CD8-positive, alpha-beta memory T cell (primary cell): ENCODE measurements at regions of chr19 and their contacts with region 1.

Region 1: GRCh38 chr19:6862673-6863078 is 24.7 kb upstream of the ADGRE1 start:
- DNase-seq: peak; percentile 82 to 94 (median 88)
- H3K4me3 ChIP-seq: no peak overlapping the region
- H3K4me3 Mint-ChIP-seq: peak overlapping the region; percentile 64 to 89 (median 88)
- H3K27ac ChIP-seq: no peak overlapping the region
- H3K27ac Mint-ChIP-seq: peak overlapping the region; percentile 73 to 97 (median 84)
- H3K4me1 ChIP-seq: peaks cover 7% of the 10 kb centered on the region
- H3K4me1 Mint-ChIP-seq: peaks cover 15 to 20% (median 19%) of the 10 kb centered on the region in 3 donors
- H3K27me3 ChIP-seq: no peaks in the 10 kb centered on the region
- H3K27me3 Mint-ChIP-seq: peaks cover 2 to 7% of the 10 kb centered on the region in 2 donors

Region 2: GRCh38 chr19:6516659-6517291 is 345.9 kb before region 1 on chr19:
- CTCF ChIA-PET with region 1: interaction called, 40 read pairs
- POLR2A ChIA-PET with region 1: interaction called, 5 read pairs
- DNase-seq: peak; percentile 81 to 93 (median 88)
- H3K4me3 ChIP-seq: peak overlapping the region; percentile 84
- H3K4me3 Mint-ChIP-seq: peak overlapping the region; percentile 92 to 98 (median 94)
- H3K27ac ChIP-seq: peak overlapping the region; percentile 70
- H3K27ac Mint-ChIP-seq: peak overlapping the region; percentile 13 to 96 (median 92)
- H3K4me1 ChIP-seq: peaks cover 16% of the 10 kb centered on the region
- H3K4me1 Mint-ChIP-seq: peaks cover 32 to 38% (median 33%) of the 10 kb centered on the region in 3 donors
- H3K27me3 ChIP-seq: no peaks in the 10 kb centered on the region
- H3K27me3 Mint-ChIP-seq: no peaks in the 10 kb centered on the region

Region 3: DNA sequence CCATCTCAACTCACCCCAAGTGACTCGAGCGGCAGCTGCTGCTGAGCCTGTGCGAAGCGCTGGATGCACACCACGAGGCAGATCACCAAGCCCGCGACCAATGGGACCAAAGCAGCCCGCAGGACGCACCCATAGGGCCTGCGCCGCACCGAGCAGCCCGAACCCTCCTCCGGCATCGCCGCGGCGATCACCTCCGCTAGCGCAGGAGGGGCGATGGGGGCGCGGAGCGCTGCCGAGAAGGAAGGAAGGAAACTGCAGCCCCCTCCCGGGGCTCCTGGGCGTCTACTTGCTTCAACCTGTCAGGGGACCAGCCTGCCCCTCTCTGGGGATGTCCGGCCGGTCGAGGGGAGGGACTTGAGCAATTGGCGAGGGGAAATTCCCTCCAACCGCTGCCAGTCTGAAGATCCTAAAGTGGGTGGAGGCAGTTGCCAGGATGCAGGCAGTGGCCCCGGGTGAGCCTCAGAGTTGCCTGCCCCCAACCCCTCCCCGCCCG is 271.8 kb before region 1 on chr19 and contains the start of gene CD70:
- CTCF ChIA-PET with region 1: no interaction called
- POLR2A ChIA-PET with region 1: no interaction called
- DNase-seq: peak; percentile 28 to 65 (median 51)
- H3K4me3 ChIP-seq: peak within 1 kb of the TSS; percentile 62
- H3K4me3 Mint-ChIP-seq: peak within 1 kb of the TSS; percentile 79 to 90 (median 86)
- H3K27ac ChIP-seq: peak within 1 kb of the TSS; percentile 19
- H3K27ac Mint-ChIP-seq: peak within 1 kb of the TSS in 7 of 8 donors; percentile 30 to 97 (median 79)
- H3K4me1 ChIP-seq: peaks cover 48% of the 10 kb centered on the region
- H3K4me1 Mint-ChIP-seq: peaks cover 56 to 63% (median 59%) of the 10 kb centered on the region in 3 donors
- H3K27me3 ChIP-seq: peaks cover 14% of the 10 kb centered on the region
- H3K27me3 Mint-ChIP-seq: peaks cover 35 to 41% of the 10 kb centered on the region in 2 donors
- total RNA-seq, gene CD70: 63.1 to 70.0 TPM

Region 4: GRCh38 chr19:6632002-6632621 is 230.6 kb before region 1 on chr19:
- CTCF ChIA-PET with region 1: interaction called, 42 read pairs
- POLR2A ChIA-PET with region 1: interaction called, 6 read pairs
- DNase-seq: peak; percentile 71 to 85 (median 77)
- H3K4me3 ChIP-seq: no peak overlapping the region
- H3K4me3 Mint-ChIP-seq: peak overlapping the region in 1 of 7 donors; percentile 3
- H3K27ac ChIP-seq: no peak overlapping the region
- H3K27ac Mint-ChIP-seq: peak overlapping the region in 4 of 8 donors; percentile 47 to 76 (median 71)
- H3K4me1 ChIP-seq: no peaks in the 10 kb centered on the region
- H3K4me1 Mint-ChIP-seq: peaks cover 14 to 17% (median 15%) of the 10 kb centered on the region in 3 donors
- H3K27me3 ChIP-seq: no peaks in the 10 kb centered on the region
- H3K27me3 Mint-ChIP-seq: peaks cover 4 to 5% of the 10 kb centered on the region in 2 donors

Region 5: GRCh38 chr19:6772028-6772865 is 90.4 kb before region 1 on chr19 and contains the start of gene VAV1:
- CTCF ChIA-PET with region 1: interaction called, 22 read pairs
- POLR2A ChIA-PET with region 1: no interaction called
- DNase-seq: peak; percentile 74 to 88 (median 75)
- H3K4me3 ChIP-seq: peak within 1 kb of the TSS; percentile 98
- H3K4me3 Mint-ChIP-seq: peak within 1 kb of the TSS; percentile 85 to 97 (median 92)
- H3K27ac ChIP-seq: peak within 1 kb of the TSS; percentile 93
- H3K27ac Mint-ChIP-seq: peak within 1 kb of the TSS; percentile 89 to 99 (median 98)
- H3K4me1 ChIP-seq: peaks cover 38% of the 10 kb centered on the region
- H3K4me1 Mint-ChIP-seq: peaks cover 45 to 56% (median 55%) of the 10 kb centered on the region in 3 donors
- H3K27me3 ChIP-seq: no peaks in the 10 kb centered on the region
- H3K27me3 Mint-ChIP-seq: no peaks in the 10 kb centered on the region
- total RNA-seq, gene VAV1: 51.9 to 52.9 TPM

Region 6: GRCh38 chr19:6876748-6877147 is 14.1 kb after region 1 on chr19:
- CTCF ChIA-PET with region 1: interaction called, 14 read pairs
- POLR2A ChIA-PET with region 1: no interaction called
- DNase-seq: no peak
- H3K4me3 ChIP-seq: no peak overlapping the region
- H3K4me3 Mint-ChIP-seq: no peak overlapping the region
- H3K27ac ChIP-seq: no peak overlapping the region
- H3K27ac Mint-ChIP-seq: no peak overlapping the region
- H3K4me1 ChIP-seq: peaks cover 5% of the 10 kb centered on the region
- H3K4me1 Mint-ChIP-seq: peaks cover 0 to 5% (median 3%) of the 10 kb centered on the region in 3 donors
- H3K27me3 ChIP-seq: no peaks in the 10 kb centered on the region
- H3K27me3 Mint-ChIP-seq: peaks cover 8 to 9% of the 10 kb centered on the region in 2 donors

Region 7: GRCh38 chr19:6958791-6959190 is 96.1 kb after region 1 on chr19:
- CTCF ChIA-PET with region 1: no interaction called
- POLR2A ChIA-PET with region 1: no interaction called
- DNase-seq: no peak
- H3K4me3 ChIP-seq: no peak overlapping the region
- H3K4me3 Mint-ChIP-seq: no peak overlapping the region
- H3K27ac ChIP-seq: no peak overlapping the region
- H3K27ac Mint-ChIP-seq: no peak overlapping the region
- H3K4me1 ChIP-seq: no peaks in the 10 kb centered on the region
- H3K4me1 Mint-ChIP-seq: peaks cover 2 to 4% (median 3%) of the 10 kb centered on the region in 3 donors
- H3K27me3 ChIP-seq: no peaks in the 10 kb centered on the region
- H3K27me3 Mint-ChIP-seq: peaks cover 5 to 12% of the 10 kb centered on the region in 2 donors